ENCODE measurements at regions of chr6 and their contacts with region 1.

Region 1: DNA sequence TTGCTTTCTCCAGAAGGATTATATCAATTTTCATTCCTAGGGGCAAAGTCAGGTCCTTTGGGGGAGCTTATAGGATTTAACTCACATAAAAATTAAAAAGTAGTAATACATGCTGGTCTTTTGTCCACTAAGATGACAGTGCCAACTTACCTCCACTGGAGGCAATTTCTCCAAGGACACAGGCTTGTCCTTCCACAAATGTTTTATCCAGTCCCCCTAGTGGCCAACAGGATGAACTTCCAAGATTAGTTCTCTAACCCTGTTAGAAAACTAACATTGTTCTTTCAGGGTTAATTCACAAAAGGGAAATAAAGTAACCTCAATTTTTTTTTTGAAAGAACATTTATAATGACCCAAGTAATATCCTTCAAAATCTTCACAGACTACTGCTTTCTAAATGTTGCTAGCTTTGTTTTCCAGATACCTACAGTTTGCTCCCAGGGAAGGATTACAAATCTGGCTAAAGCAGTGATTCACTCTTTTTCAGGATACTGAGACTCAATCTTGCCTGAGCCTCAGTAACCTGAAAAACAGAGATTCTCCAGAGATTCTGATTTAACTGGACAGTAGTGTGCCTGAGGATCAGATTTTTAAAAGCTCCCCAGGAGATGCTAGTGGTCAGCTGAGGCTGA is 31.7 kb upstream of the UBR2 start:
- DNase-seq: no peak
- ATAC-seq: peak; percentile 92
- H3K4me3 ChIP-seq: no peak overlapping the region
- H3K27ac ChIP-seq: no peak overlapping the region
- H3K4me1 ChIP-seq: no peaks in the 10 kb centered on the region
- H3K27me3 ChIP-seq: no peaks in the 10 kb centered on the region
- CTCF ChIP-seq: peak; percentile 74 to 89 (median 75)
- EP300 ChIP-seq: no peak
- POLR2A ChIP-seq: no peak
- RAD21 ChIP-seq: peak; percentile 84

Region 2: GRCh38 chr6:42210551-42210950 is 321.6 kb before region 1 on chr6:
- CTCF ChIA-PET with region 1: interaction called, 14 read pairs
- POLR2A ChIA-PET with region 1: no interaction called
- RAD21 ChIA-PET with region 1: interaction called, 5 read pairs
- SMC1A ChIA-PET with region 1: interaction called, 3 read pairs
- in situ Hi-C with region 1: no loop called
- intact Hi-C with region 1: no loop called
- DNase-seq: no peak
- ATAC-seq: no peak
- H3K4me3 ChIP-seq: no peak overlapping the region
- H3K27ac ChIP-seq: no peak overlapping the region
- H3K4me1 ChIP-seq: peaks cover 18% of the 10 kb centered on the region
- H3K27me3 ChIP-seq: no peaks in the 10 kb centered on the region
- CTCF ChIP-seq: no peak
- EP300 ChIP-seq: no peak
- POLR2A ChIP-seq: no peak
- RAD21 ChIP-seq: no peak

Region 3: GRCh38 chr6:42260972-42261371 is 271.2 kb before region 1 on chr6:
- CTCF ChIA-PET with region 1: interaction called, 21 read pairs
- POLR2A ChIA-PET with region 1: no interaction called
- RAD21 ChIA-PET with region 1: interaction called, 12 read pairs
- SMC1A ChIA-PET with region 1: interaction called, 16 read pairs
- in situ Hi-C with region 1: no loop called
- intact Hi-C with region 1: no loop called
- DNase-seq: no peak
- ATAC-seq: peak; percentile 91
- H3K4me3 ChIP-seq: no peak overlapping the region
- H3K27ac ChIP-seq: no peak overlapping the region
- H3K4me1 ChIP-seq: no peaks in the 10 kb centered on the region
- H3K27me3 ChIP-seq: no peaks in the 10 kb centered on the region
- CTCF ChIP-seq: peak in 2 of 3 experiments; percentile 47 to 55; a peak in 4 of 6 replicates
- EP300 ChIP-seq: no peak
- POLR2A ChIP-seq: no peak
- RAD21 ChIP-seq: peak; percentile 71

Region 4: DNA sequence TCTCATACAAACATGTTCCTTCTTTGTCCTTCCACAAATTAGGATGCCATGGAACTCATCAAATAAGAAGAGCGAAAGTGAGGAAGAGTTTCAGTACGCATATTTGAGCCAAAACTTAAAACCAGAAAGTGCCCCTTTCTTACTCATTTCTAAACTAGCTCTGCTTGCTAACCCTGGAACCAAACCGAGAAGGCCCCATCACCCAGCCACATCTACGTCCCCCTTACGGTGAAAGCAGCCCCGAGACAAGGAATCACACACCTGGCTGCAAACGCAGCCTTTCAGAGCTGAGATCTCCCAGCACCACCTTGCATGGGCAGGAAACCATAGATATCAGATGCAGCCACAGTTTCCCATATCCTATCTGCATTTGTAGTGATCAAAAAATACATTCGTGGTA is 108.9 kb before region 1 on chr6:
- CTCF ChIA-PET with region 1: interaction called, 15 read pairs
- POLR2A ChIA-PET with region 1: no interaction called
- RAD21 ChIA-PET with region 1: interaction called, 12 read pairs
- SMC1A ChIA-PET with region 1: interaction called, 4 read pairs
- in situ Hi-C with region 1: no loop called
- intact Hi-C with region 1: no loop called
- DNase-seq: peak; percentile 61
- ATAC-seq: peak; percentile 78
- H3K4me3 ChIP-seq: no peak overlapping the region
- H3K27ac ChIP-seq: no peak overlapping the region
- H3K4me1 ChIP-seq: peaks cover 52% of the 10 kb centered on the region
- H3K27me3 ChIP-seq: no peaks in the 10 kb centered on the region
- CTCF ChIP-seq: no peak
- EP300 ChIP-seq: peak; percentile 31 to 34; a peak in 1 of 4 replicates
- POLR2A ChIP-seq: no peak
- RAD21 ChIP-seq: no peak

Region 5: DNA sequence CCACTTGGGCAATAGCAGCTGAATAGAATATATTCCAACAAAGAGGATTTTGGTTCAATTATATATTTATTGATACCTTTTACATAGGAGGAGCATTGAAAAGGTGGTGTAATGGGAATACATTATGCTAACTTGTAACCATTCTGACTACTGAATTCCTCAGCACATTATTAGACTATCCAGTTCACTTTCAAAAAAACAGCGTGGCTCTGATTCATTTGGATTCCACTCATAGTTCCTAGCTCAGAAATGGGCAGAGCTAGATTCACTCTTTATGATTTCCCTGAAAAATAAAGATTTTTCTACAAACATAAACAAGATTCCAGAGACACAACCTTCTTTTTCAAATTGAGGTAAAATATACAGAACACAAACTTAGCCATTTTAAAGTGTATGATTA is 71.3 kb before region 1 on chr6:
- CTCF ChIA-PET with region 1: interaction called, 10 read pairs
- POLR2A ChIA-PET with region 1: no interaction called
- RAD21 ChIA-PET with region 1: interaction called, 4 read pairs
- SMC1A ChIA-PET with region 1: interaction called, 6 read pairs
- in situ Hi-C with region 1: no loop called
- intact Hi-C with region 1: no loop called
- DNase-seq: no peak
- ATAC-seq: no peak
- H3K4me3 ChIP-seq: no peak overlapping the region
- H3K27ac ChIP-seq: no peak overlapping the region
- H3K4me1 ChIP-seq: no peaks in the 10 kb centered on the region
- H3K27me3 ChIP-seq: no peaks in the 10 kb centered on the region
- CTCF ChIP-seq: no peak
- EP300 ChIP-seq: no peak
- POLR2A ChIP-seq: no peak
- RAD21 ChIP-seq: no peak

Region 6: GRCh38 chr6:42511803-42512422 is 20.2 kb before region 1 on chr6:
- CTCF ChIA-PET with region 1: interaction called, 61 read pairs
- POLR2A ChIA-PET with region 1: interaction called, 5 read pairs
- RAD21 ChIA-PET with region 1: interaction called, 30 read pairs
- SMC1A ChIA-PET with region 1: interaction called, 50 read pairs
- in situ Hi-C with region 1: no loop called
- intact Hi-C with region 1: no loop called
- DNase-seq: no peak
- ATAC-seq: no peak
- H3K4me3 ChIP-seq: no peak overlapping the region
- H3K27ac ChIP-seq: no peak overlapping the region
- H3K4me1 ChIP-seq: peaks cover 25% of the 10 kb centered on the region
- H3K27me3 ChIP-seq: no peaks in the 10 kb centered on the region
- CTCF ChIP-seq: no peak
- EP300 ChIP-seq: no peak
- POLR2A ChIP-seq: no peak
- RAD21 ChIP-seq: no peak